Body of pancreas (tissue), 4 donors: ENCODE measurements at regions of chr11 and their contacts with region 1.

Region 1: DNA sequence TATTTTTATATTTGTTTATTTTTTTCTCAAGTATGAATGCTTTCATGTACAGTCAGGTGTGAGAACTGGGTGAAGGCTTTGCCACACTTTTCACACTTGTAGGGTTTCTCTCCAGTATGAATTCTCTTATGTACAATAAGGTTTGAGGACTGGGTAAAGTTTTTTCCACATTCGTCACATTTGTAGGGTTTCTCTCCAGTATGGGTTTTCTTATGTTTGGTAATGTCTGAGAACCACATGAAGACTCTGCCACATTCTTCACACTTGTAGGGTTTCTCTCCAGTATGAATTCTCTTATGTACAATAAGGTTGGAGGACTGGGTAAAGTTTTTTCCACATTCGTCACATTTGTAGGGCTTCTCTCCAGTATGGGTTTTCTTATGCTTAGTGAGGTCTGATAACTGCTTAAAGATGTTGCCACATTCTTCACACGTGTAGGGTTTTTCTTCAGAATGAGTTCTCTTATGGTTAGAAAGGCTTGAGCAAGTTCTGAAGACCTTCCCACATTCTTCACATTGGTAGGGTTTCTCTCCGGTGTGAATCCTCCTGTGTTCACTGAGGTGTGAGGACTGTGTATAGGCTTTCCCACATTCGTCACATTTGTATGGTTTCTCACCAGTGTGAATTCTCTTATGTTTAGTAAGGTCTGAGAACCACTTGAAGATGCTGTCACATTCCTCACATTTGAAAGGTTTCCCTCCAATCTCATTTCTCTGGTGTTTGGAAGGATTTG is 19.7 kb downstream of the ZNF195 start:
- DNase-seq: no peak
- ATAC-seq: no peak
- H3K4me3 ChIP-seq: no peak overlapping the region
- H3K27ac ChIP-seq: no peak overlapping the region
- H3K4me1 ChIP-seq: no peaks in the 10 kb centered on the region
- H3K27me3 ChIP-seq: no peaks in the 10 kb centered on the region
- CTCF ChIP-seq: no peak
- POLR2A ChIP-seq: no peak

Region 2: GRCh38 chr11:3412837-3413236 is 53.6 kb after region 1 on chr11:
- intact Hi-C with region 1: loop called (anchors 10 kb)
- DNase-seq: no peak
- ATAC-seq: no peak
- H3K4me3 ChIP-seq: no peak overlapping the region
- H3K27ac ChIP-seq: no peak overlapping the region
- H3K4me1 ChIP-seq: peaks cover 7% of the 10 kb centered on the region
- H3K27me3 ChIP-seq: no peaks in the 10 kb centered on the region
- CTCF ChIP-seq: no peak
- POLR2A ChIP-seq: no peak